CD4-positive, alpha-beta T cell (primary cell): ENCODE measurements at regions of chr19 and their contacts with region 1.

Region 1: GRCh38 chr19:10717356-10718204 is at the start of gene DNM2:
- DNase-seq: peak; percentile 92 to 100 (median 96)
- ATAC-seq: peak; percentile 82
- H3K4me3 ChIP-seq: peak within 1 kb of the TSS; percentile 80
- H3K4me3 Mint-ChIP-seq: peak within 1 kb of the TSS; percentile 96
- H3K27ac ChIP-seq: peak within 1 kb of the TSS; percentile 55 to 87
- H3K27ac Mint-ChIP-seq: peak within 1 kb of the TSS; percentile 89
- H3K4me1 ChIP-seq: peaks cover 48% of the 10 kb centered on the region
- H3K4me1 Mint-ChIP-seq: peaks cover 49% of the 10 kb centered on the region
- H3K27me3 ChIP-seq: no peaks in the 10 kb centered on the region
- H3K27me3 Mint-ChIP-seq: no peaks in the 10 kb centered on the region
- CTCF ChIP-seq: peak; percentile 77
- total RNA-seq, gene DNM2: 279 to 286 TPM

Region 2: DNA sequence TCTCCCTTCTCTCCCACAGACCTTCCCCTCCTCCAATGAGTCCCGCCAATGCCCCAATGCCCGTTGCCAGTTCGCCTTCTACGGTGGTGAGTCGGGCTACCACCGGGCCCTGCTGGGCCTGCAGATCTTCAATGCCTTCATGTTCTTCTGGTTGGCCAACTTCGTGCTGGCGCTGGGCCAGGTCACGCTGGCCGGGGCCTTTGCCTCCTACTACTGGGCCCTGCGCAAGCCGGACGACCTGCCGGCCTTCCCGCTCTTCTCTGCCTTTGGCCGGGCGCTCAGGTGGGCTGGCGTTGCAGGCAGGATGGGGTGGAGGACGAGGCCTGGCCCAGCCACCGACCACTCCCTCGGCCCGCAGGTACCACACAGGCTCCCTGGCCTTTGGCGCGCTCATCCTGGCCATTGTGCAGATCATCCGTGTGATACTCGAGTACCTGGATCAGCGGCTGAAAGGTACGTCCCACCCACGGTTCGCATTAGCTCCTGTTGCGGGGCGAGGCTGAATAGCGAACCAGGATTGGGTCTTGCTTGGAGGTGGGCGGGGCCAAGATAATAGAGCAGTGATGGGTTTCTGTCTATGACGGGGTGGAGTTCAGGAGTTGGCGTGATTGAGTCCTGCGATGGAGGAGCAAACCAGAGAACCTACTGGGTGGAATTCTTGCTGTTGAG is 81.1 kb before region 1 on chr19:
- CTCF ChIA-PET with region 1: no interaction called
- POLR2A ChIA-PET with region 1: no interaction called
- intact Hi-C with region 1: no loop called
- DNase-seq: no peak
- ATAC-seq: no peak
- H3K4me3 ChIP-seq: no peak overlapping the region
- H3K4me3 Mint-ChIP-seq: no peak overlapping the region
- H3K27ac ChIP-seq: no peak overlapping the region
- H3K27ac Mint-ChIP-seq: peak overlapping the region; percentile 25
- H3K4me1 ChIP-seq: no peaks in the 10 kb centered on the region
- H3K4me1 Mint-ChIP-seq: no peaks in the 10 kb centered on the region
- H3K27me3 ChIP-seq: no peaks in the 10 kb centered on the region
- H3K27me3 Mint-ChIP-seq: no peaks in the 10 kb centered on the region
- CTCF ChIP-seq: no peak

Region 3: DNA sequence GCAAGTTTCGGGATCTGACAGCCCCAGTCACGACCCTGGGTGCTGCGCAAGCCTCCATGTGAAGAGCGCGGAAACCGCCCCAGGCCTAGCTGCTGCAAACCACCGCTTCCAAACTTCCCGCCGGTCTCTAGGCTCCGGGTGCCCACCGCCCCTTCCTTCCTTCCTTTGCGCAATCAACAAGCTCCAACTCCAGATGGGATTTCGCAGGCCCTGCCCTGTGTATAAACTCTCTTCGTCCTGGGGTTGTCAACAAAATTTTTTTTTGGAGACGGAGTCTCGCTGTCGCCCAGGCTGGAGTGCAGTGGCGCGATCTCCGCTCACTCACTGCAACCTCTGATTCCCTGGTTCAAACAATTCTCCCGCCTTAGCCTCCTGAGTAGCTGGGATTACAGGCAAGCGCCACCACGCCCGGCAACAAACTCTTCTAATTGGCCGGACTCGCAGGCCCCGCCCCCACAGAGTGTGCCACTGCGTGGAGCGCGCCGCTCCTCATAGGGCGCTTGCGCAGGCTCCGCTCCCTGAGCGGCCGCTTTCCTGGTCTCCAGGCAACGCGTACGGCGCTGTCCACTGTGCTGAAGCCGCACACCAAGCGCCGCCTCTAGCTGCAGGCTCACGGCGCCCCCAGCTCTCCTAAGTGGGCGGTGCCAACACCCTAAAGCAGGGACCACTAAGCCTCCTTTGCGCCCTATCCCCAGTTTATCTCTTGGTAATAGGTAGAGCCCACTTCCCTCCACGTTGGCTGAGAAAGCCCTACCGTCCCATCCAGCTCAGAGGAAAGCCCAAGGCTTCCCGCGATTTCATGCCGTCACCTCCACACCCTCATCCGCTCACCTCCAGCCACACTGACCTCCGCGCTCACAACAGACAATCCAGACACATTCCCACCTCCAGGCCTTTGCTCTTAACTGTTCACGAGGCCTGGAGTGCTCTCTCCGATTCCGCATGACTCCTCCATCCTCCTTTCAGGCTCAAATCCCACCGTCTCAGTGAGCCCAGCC is 21.9 kb before region 1 on chr19:
- CTCF ChIA-PET with region 1: interaction called, 15 read pairs
- POLR2A ChIA-PET with region 1: interaction called, 34 read pairs
- intact Hi-C with region 1: no loop called
- DNase-seq: peak; percentile 70 to 95 (median 84)
- ATAC-seq: peak; percentile 97
- H3K4me3 ChIP-seq: peak overlapping the region; percentile 41
- H3K4me3 Mint-ChIP-seq: peak overlapping the region; percentile 85
- H3K27ac ChIP-seq: no peak overlapping the region
- H3K27ac Mint-ChIP-seq: peak overlapping the region; percentile 31
- H3K4me1 ChIP-seq: peaks cover 17% of the 10 kb centered on the region
- H3K4me1 Mint-ChIP-seq: peaks cover 17% of the 10 kb centered on the region
- H3K27me3 ChIP-seq: peaks cover 0 to 7% of the 10 kb centered on the region in 2 experiments
- H3K27me3 Mint-ChIP-seq: peaks cover 18% of the 10 kb centered on the region
- CTCF ChIP-seq: no peak

Region 4: GRCh38 chr19:10730923-10731322 is 13.3 kb after region 1 on chr19:
- CTCF ChIA-PET with region 1: interaction called, 16 read pairs
- POLR2A ChIA-PET with region 1: interaction called, 30 read pairs
- intact Hi-C with region 1: loop called in 1 of 2 experiments (anchors 1 kb)
- DNase-seq: peak in 2 of 14 experiments; percentile 31 to 52
- ATAC-seq: no peak
- H3K4me3 ChIP-seq: no peak overlapping the region
- H3K4me3 Mint-ChIP-seq: peak overlapping the region; percentile 34
- H3K27ac ChIP-seq: peak overlapping the region; percentile 73 to 80
- H3K27ac Mint-ChIP-seq: peak overlapping the region; percentile 99
- H3K4me1 ChIP-seq: peaks cover 68% of the 10 kb centered on the region
- H3K4me1 Mint-ChIP-seq: peaks cover 49% of the 10 kb centered on the region
- H3K27me3 ChIP-seq: no peaks in the 10 kb centered on the region
- H3K27me3 Mint-ChIP-seq: no peaks in the 10 kb centered on the region
- CTCF ChIP-seq: no peak

Region 5: GRCh38 chr19:10760273-10760944 is 42.8 kb after region 1 on chr19:
- CTCF ChIA-PET with region 1: interaction called, 45 read pairs
- POLR2A ChIA-PET with region 1: interaction called, 80 read pairs
- intact Hi-C with region 1: loop called in 1 of 2 experiments (anchors 1 kb)
- DNase-seq: peak in 7 of 14 experiments; percentile 21 to 67 (median 53)
- ATAC-seq: peak; percentile 27
- H3K4me3 ChIP-seq: peak overlapping the region; percentile 34
- H3K4me3 Mint-ChIP-seq: peak overlapping the region; percentile 67
- H3K27ac ChIP-seq: peak overlapping the region; percentile 60 to 91
- H3K27ac Mint-ChIP-seq: peak overlapping the region; percentile 93
- H3K4me1 ChIP-seq: peaks cover 94% of the 10 kb centered on the region
- H3K4me1 Mint-ChIP-seq: peaks cover 87% of the 10 kb centered on the region
- H3K27me3 ChIP-seq: no peaks in the 10 kb centered on the region
- H3K27me3 Mint-ChIP-seq: no peaks in the 10 kb centered on the region
- CTCF ChIP-seq: no peak

Region 6: DNA sequence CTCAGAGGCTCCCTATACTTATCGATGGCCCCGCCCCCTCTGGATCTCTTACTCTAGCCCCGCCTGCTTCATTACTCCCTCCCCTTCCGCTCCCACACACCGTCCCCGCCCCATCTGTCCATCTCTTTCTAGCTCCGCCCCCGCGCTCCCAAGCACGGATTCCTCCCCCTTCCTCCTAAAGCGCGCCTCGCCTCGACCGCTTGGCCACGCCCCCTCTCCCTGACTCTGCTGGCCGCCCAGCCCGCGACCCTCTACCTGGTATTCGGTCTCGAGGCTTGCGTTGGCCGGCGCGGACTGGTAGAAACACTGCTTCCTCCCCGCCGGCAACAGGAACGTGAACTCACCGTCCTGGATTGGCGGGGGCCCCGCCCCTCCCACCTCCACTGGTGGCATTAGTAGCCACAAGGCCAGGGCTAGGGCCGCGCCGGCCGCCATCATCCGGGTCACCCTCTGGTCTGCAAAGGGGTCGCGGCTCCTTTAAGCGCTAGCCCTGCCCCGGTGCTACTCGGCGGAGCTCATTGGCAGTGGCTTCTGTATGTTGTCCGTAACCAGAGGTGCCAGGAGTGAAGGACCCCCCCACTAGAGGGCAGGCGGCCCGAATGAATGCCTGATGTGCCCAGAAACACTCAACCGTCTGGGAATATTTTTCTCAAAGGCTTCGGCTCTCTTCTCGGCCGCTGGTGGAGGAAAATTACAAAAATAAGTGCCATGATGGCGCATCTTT is 118.3 kb after region 1 on chr19 and contains the start of gene TMED1:
- CTCF ChIA-PET with region 1: interaction called, 19 read pairs
- POLR2A ChIA-PET with region 1: interaction called, 39 read pairs
- intact Hi-C with region 1: loop called (anchors 1 kb)
- DNase-seq: peak; percentile 85 to 98 (median 90)
- ATAC-seq: peak; percentile 86
- H3K4me3 ChIP-seq: peak within 1 kb of the TSS; percentile 71
- H3K4me3 Mint-ChIP-seq: peak within 1 kb of the TSS; percentile 98
- H3K27ac ChIP-seq: peak within 1 kb of the TSS; percentile 96
- H3K27ac Mint-ChIP-seq: peak within 1 kb of the TSS; percentile 100
- H3K4me1 ChIP-seq: peaks cover 21% of the 10 kb centered on the region
- H3K4me1 Mint-ChIP-seq: peaks cover 15% of the 10 kb centered on the region
- H3K27me3 ChIP-seq: no peaks in the 10 kb centered on the region
- H3K27me3 Mint-ChIP-seq: no peaks in the 10 kb centered on the region
- CTCF ChIP-seq: no peak
- total RNA-seq, gene TMED1: 6.7 to 7.0 TPM

Region 7: DNA sequence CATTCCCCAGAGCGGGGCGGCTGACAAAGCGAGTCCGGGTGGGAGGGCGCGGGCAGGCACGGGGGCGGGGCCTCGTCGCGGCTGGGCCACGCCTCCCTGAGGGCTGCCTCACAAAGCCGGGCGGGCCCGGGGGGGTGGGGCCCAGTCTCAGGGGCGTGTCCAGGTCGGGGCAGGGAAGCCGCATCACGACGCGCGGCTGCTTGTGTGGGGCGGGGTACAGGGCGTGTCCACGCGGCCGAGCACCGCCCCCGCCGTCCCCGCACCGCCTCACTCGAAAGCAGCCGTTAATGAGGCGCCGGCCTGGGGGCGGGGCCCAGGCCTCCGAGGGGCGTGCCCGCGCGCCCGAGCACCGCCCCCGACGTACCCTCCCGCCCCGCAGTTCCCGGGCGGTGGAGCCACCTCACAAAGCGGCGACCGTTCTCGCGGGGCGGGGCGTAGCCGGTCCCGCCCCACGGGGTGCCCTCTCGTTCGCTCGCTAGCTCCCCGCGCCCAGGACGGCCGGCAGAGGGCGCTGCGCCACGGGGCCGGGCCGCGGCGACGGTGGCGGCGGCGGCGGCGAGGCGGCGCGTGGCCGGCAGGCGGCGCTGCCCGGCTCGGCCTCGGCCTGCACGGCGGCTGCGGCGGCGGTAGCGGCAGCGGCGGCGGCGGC is 153.5 kb after region 1 on chr19 and contains the start of gene CARM1:
- CTCF ChIA-PET with region 1: interaction called, 3 read pairs
- POLR2A ChIA-PET with region 1: interaction called, 21 read pairs
- intact Hi-C with region 1: no loop called
- DNase-seq: peak; percentile 98 to 100 (median 99)
- ATAC-seq: peak; percentile 83
- H3K4me3 ChIP-seq: peak within 1 kb of the TSS; percentile 69
- H3K4me3 Mint-ChIP-seq: peak within 1 kb of the TSS; percentile 86
- H3K27ac ChIP-seq: peak within 1 kb of the TSS in 1 of 2 donors; percentile 57
- H3K27ac Mint-ChIP-seq: peak within 1 kb of the TSS; percentile 54
- H3K4me1 ChIP-seq: peaks cover 26% of the 10 kb centered on the region
- H3K4me1 Mint-ChIP-seq: peaks cover 18% of the 10 kb centered on the region
- H3K27me3 ChIP-seq: no peaks in the 10 kb centered on the region
- H3K27me3 Mint-ChIP-seq: no peaks in the 10 kb centered on the region
- CTCF ChIP-seq: peak; percentile 34
- total RNA-seq, gene CARM1: 17.5 to 18.0 TPM